Transverse colon (tissue), 4 donors: ENCODE measurements at regions of chr10 and their contacts with region 1.

Region 1: DNA sequence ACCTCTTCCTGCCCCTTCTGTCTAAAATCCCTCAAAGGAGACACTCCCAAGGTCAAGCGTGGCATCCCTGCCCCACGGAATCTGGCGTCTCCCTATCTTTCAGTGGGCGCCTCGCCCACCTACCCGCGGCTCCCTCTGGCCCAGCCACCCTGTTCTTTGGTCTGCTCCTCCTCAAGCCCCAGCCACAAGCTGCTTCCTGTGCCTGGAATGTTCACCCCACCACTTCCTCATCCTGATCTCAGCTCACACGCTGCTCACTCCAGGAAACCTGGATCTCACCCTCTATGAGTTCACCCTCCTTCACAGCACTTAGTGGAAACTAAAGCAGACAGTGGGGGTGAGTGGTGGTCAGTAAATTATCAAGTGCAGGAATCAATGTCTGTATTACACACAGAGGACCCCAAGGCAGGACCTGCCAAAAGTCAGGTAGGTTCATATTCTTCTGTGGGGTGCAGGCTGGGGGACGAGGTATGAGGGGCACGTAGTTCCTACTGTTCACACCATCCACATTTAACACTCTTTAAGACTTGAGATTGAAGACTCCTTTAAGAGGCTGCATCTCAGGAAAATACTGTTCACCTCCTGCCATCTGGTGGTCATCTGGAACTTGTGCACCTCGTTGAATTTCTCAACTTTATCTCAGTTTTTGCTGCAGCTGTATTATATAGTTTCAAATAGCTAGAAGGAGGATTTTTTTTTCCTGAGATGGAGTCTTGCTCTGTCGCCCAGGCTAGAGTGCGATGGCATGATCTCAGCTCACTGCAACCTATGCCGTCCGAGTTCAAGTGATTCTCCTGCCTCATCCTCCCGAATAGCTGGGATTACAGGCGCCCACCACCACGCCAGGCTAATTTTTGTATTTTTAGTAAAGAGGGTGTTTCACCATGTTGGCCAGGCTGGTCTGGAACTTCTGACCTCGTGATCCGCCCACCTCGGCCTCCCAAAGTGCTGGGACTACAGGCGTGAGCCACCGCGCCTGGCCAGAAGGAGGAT is 166.6 kb downstream of the ARHGAP21 start:
- DNase-seq: peak; percentile 28
- H3K4me3 ChIP-seq: no peak overlapping the region
- H3K27ac ChIP-seq: no peak overlapping the region
- H3K4me1 ChIP-seq: peaks cover 0 to 3% (median under 1%) of the 10 kb centered on the region in 4 donors
- H3K27me3 ChIP-seq: no peaks in the 10 kb centered on the region
- CTCF ChIP-seq: peak; percentile 56 to 65 (median 61)
- EP300 ChIP-seq: no peak
- POLR2A ChIP-seq: no peak

Region 2: DNA sequence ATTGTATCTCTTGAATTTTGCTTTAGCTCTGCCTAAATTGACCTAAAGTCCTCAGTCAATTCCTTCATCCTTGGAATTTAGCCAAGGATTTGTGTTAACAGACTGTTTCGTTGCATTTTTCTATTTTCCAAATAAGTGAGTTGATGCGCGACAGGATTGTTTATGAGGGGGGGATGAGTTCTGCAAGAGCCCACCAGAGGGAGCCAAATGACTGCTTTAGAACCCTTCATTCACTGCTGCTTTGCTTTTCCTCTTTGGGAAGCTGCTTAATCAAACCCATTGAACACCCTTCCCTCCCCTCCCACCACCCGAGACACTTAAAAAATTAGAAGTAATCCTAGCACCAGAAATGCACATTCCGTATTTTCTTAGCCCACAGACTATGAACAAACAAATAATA is 1398.7 kb before region 1 on chr10:
- in situ Hi-C with region 1: loop called in 1 of 4 experiments (anchors 25 kb)
- intact Hi-C with region 1: no loop called
- DNase-seq: peak; percentile 27
- H3K4me3 ChIP-seq: peak overlapping the region in 1 of 4 donors; percentile 3
- H3K27ac ChIP-seq: no peak overlapping the region
- H3K4me1 ChIP-seq: peaks cover 0 to 4% (median 0%) of the 10 kb centered on the region in 4 donors
- H3K27me3 ChIP-seq: peaks cover 10% of the 10 kb centered on the region
- CTCF ChIP-seq: peak; percentile 66 to 77 (median 72)
- EP300 ChIP-seq: no peak
- POLR2A ChIP-seq: no peak